Activated CD8-positive, alpha-beta T cell treated with anti-CD3 and anti-CD28 coated beads, Interleukin-2, amount 10 ng/mL, durations not matched to agents 7 days and 5 days (primary cell): ENCODE measurements at regions of chr15 and their contacts with region 1.

Region 1: GRCh38 chr15:66851226-66852071 is 149.4 kb downstream of the SMAD6 start:
- DNase-seq: peak; percentile 83
- ATAC-seq: peak; percentile 97
- H3K4me3 Mint-ChIP-seq: no peak overlapping the region
- H3K27ac Mint-ChIP-seq: no peak overlapping the region
- H3K4me1 Mint-ChIP-seq: peaks cover 10% of the 10 kb centered on the region
- H3K27me3 Mint-ChIP-seq: peaks cover 12% of the 10 kb centered on the region

Region 2: GRCh38 chr15:66603301-66604179 is 247.9 kb before region 1 on chr15:
- CTCF ChIA-PET with region 1: interaction called, 96 read pairs
- POLR2A ChIA-PET with region 1: no interaction called
- DNase-seq: peak; percentile 74
- ATAC-seq: peak; percentile 88
- H3K4me3 Mint-ChIP-seq: no peak overlapping the region
- H3K27ac Mint-ChIP-seq: no peak overlapping the region
- H3K4me1 Mint-ChIP-seq: peaks cover 9% of the 10 kb centered on the region
- H3K27me3 Mint-ChIP-seq: peaks cover 18% of the 10 kb centered on the region

Region 3: GRCh38 chr15:66702035-66702786 is 149.2 kb before region 1 on chr15 and contains the start of gene SMAD6:
- CTCF ChIA-PET with region 1: interaction called, 13 read pairs
- POLR2A ChIA-PET with region 1: no interaction called
- DNase-seq: peak; percentile 88
- ATAC-seq: peak; percentile 32
- H3K4me3 Mint-ChIP-seq: peak within 1 kb of the TSS; percentile 87
- H3K27ac Mint-ChIP-seq: peak within 1 kb of the TSS; percentile 87
- H3K4me1 Mint-ChIP-seq: peaks cover 21% of the 10 kb centered on the region
- H3K27me3 Mint-ChIP-seq: peaks cover 22% of the 10 kb centered on the region
- total RNA-seq, gene SMAD6: 0.97 to 1.2 TPM

Region 4: GRCh38 chr15:66789029-66790025 is 62.1 kb before region 1 on chr15:
- CTCF ChIA-PET with region 1: interaction called, 18 read pairs
- POLR2A ChIA-PET with region 1: no interaction called
- DNase-seq: no peak
- ATAC-seq: no peak
- H3K4me3 Mint-ChIP-seq: no peak overlapping the region
- H3K27ac Mint-ChIP-seq: no peak overlapping the region
- H3K4me1 Mint-ChIP-seq: no peaks in the 10 kb centered on the region
- H3K27me3 Mint-ChIP-seq: peaks cover 5% of the 10 kb centered on the region

Region 5: DNA sequence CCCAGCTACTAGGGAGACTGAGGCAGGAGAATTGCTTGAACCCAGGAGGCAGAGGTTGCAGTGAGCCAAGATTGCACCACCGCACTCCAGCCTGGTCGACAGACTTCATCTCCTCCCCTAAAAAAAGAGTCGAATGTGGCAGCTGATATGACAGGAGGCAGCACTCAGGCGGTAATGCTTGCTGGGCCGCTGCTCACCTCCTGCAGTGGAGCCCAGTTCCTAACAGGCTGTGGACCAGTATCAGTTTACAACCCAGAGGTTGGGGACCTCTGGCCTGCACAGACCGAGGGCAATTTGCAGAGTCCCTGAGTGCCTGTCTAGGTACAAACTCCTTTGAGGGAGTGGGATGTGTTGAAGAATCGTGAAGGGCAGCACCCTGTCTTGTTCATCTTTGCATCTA is 13.2 kb before region 1 on chr15:
- CTCF ChIA-PET with region 1: interaction called, 10 read pairs
- POLR2A ChIA-PET with region 1: no interaction called
- DNase-seq: no peak
- ATAC-seq: no peak
- H3K4me3 Mint-ChIP-seq: no peak overlapping the region
- H3K27ac Mint-ChIP-seq: no peak overlapping the region
- H3K4me1 Mint-ChIP-seq: no peaks in the 10 kb centered on the region
- H3K27me3 Mint-ChIP-seq: peaks cover 26% of the 10 kb centered on the region